CD4-positive, alpha-beta memory T cell (primary cell): ENCODE measurements at regions of chr2 and their contacts with region 1.

Region 1: DNA sequence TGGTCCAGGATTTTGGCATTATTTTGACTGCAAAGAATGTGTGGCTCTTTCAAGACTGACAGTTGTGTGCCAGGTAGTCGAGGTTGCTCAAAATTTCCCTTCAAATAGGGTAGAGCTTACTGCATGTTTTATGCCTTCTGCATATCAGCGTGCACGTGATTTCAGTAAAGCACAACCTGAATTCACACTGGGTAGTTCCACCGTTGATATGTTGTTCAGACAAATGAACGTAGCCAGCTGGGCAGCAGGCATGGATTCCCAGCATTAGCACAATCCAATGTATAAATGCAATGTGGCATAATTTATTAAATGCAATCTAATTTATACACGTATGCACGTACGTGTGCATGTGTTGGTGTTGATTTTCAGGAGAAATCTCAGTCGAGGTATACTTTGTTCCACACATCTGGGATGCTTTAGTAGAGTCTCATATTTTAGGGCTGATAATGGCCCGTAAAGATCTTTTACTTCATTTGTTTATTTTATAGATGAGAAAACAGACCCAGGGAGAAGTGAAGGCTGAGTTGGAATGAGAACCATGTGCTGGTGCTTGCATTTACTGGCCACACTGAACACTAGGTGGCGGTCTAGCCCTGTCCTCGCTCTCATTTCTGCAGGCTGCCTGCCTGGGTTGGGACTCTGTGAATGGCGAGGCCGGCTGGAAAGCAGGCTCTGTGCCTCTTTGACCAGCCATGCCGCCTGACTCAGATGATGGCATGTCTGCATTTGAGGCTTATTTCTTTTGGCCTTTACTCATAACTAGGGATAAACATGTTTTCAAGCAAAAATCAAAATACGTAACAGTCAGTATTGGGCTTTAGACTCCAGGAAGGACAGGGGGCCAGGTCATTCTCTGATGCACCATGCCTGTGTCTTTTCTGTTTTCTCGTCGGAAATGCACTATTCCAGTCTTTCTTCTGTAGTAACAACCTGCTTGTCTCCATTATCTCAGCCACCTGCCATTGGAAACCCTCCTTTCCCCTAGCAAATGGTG is 120.4 kb downstream of the RNF144A start:
- DNase-seq: peak in 4 of 5 donors; percentile 42 to 61 (median 51)
- H3K4me3 ChIP-seq: no peak overlapping the region
- H3K4me3 Mint-ChIP-seq: no peak overlapping the region
- H3K27ac ChIP-seq: no peak overlapping the region
- H3K27ac Mint-ChIP-seq: no peak overlapping the region
- H3K4me1 ChIP-seq: no peaks in the 10 kb centered on the region
- H3K4me1 Mint-ChIP-seq: peaks cover under 1 to 12% (median 5%) of the 10 kb centered on the region in 4 donors
- H3K27me3 ChIP-seq: no peaks in the 10 kb centered on the region
- H3K27me3 Mint-ChIP-seq: no peaks in the 10 kb centered on the region

Region 2: DNA sequence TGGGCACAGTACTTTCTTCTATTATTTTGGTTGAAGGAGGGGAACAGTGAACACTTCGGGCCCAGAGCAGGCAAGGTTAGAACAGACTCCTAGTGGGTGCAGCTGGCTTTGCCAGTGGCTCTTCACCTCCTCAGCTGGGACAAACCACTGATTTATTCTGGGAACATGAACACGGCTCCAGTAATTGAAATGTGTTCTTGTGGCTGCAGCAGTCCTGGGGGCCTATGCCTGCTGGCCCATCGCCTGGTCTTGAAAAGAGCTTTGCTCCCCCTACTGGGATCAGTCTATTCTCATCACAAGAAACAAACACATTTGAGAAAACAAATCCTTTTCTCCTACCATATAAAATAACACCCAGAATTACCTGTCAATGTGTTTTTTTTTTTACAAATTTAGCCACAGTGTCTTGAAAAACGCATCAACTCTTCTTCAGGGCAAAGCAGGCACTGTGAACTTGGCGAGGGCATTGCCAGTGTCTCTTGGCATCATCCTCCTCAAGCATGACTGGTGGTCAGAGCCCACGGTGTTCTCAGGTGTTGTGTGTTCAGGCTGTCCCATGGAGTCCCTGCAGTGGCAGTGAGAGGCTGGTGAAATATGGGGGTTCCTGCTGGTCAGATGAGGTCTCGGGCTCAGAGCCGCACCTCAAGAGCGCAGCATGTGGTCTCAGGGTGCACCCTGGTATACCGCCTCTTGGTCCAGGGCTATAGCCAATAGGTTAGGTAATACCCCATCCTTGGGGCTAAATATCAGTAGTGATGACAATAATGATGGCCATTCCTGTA is 69.1 kb before region 1 on chr2:
- CTCF ChIA-PET with region 1: no interaction called
- POLR2A ChIA-PET with region 1: no interaction called
- intact Hi-C with region 1: no loop called
- DNase-seq: no peak
- H3K4me3 ChIP-seq: no peak overlapping the region
- H3K4me3 Mint-ChIP-seq: no peak overlapping the region
- H3K27ac ChIP-seq: no peak overlapping the region
- H3K27ac Mint-ChIP-seq: no peak overlapping the region
- H3K4me1 ChIP-seq: no peaks in the 10 kb centered on the region
- H3K4me1 Mint-ChIP-seq: peaks cover 0 to 16% (median 10%) of the 10 kb centered on the region in 4 donors
- H3K27me3 ChIP-seq: no peaks in the 10 kb centered on the region
- H3K27me3 Mint-ChIP-seq: no peaks in the 10 kb centered on the region

Region 3: DNA sequence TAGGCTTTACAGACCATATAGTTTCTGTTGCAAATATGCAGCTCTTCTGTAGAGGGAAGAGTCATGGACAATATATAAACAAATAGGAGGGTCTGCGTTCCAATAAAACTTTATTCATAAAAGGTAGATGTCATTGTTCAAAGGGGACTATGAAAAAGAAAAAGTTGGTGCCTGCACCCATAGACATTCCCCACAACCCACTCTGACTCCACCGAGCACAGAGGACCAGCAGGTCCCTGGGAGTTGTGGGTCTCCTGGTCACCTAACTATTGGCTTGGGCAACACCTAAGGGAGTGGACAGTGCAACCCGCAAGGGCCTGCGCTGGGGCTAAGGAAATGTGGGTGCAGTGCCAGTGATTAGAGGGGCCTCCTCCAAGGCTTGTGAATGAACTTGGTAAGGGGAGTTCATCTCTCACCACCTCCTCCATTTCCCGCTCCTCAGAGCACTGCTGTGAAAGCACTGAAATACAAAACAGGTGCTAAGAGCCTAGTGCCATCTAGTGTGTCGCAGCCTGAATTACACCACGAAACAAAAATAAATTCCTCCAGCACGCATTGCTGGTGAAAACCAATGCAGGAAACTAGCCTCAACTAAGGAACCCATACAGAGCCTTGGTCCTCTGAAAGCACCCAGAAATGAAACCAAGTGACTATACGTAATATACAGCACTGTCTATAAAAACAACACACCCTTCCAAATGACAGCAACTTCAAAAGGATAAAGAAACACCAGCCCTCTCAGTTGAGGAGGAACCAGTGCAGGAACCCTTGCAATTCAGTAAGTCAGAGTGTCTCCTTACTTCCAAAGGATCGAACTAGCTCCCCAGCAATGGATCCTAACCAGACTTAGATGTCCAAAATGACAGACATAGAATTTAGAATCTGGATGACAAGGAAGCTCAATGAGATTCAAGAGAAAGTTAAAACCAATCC is 46.2 kb after region 1 on chr2:
- CTCF ChIA-PET with region 1: no interaction called
- POLR2A ChIA-PET with region 1: no interaction called
- intact Hi-C with region 1: loop called (anchors 1 kb)
- DNase-seq: peak in 2 of 5 donors; percentile 13 to 43
- H3K4me3 ChIP-seq: no peak overlapping the region
- H3K4me3 Mint-ChIP-seq: no peak overlapping the region
- H3K27ac ChIP-seq: no peak overlapping the region
- H3K27ac Mint-ChIP-seq: peak overlapping the region in 2 of 7 donors; percentile 50 to 64
- H3K4me1 ChIP-seq: no peaks in the 10 kb centered on the region
- H3K4me1 Mint-ChIP-seq: peaks cover 0 to 2% (median under 1%) of the 10 kb centered on the region in 4 donors
- H3K27me3 ChIP-seq: no peaks in the 10 kb centered on the region
- H3K27me3 Mint-ChIP-seq: no peaks in the 10 kb centered on the region

Region 4: DNA sequence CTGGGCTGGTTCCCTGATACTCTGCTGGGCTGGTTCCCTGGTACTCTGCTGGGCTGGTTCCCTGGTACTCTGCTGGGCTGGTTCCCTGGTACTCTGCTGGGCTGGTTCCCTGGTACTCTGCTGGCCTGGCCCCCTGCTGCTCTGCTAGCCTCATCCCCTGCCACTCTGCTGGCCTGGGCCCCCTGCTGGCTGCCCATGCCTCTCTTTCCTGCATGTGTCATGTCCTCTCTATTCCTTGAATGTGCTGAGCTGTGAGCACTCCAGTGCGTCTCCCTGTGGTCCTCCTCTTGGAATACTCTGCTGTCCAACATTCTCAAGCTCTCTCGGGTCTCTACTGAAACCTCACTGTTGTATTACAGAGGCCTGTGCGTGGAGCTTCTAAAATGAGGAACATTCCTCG is 95.9 kb after region 1 on chr2:
- CTCF ChIA-PET with region 1: no interaction called
- POLR2A ChIA-PET with region 1: no interaction called
- intact Hi-C with region 1: no loop called
- DNase-seq: no peak
- H3K4me3 ChIP-seq: no peak overlapping the region
- H3K4me3 Mint-ChIP-seq: no peak overlapping the region
- H3K27ac ChIP-seq: no peak overlapping the region
- H3K27ac Mint-ChIP-seq: no peak overlapping the region
- H3K4me1 ChIP-seq: no peaks in the 10 kb centered on the region
- H3K4me1 Mint-ChIP-seq: peaks cover 0 to 1% (median under 1%) of the 10 kb centered on the region in 4 donors
- H3K27me3 ChIP-seq: no peaks in the 10 kb centered on the region
- H3K27me3 Mint-ChIP-seq: peaks cover 0 to 1% of the 10 kb centered on the region in 2 donors